ENCODE measurements at regions of chr2 and their contacts with region 1.

Region 1: GRCh38 chr2:119790466-119790865 is 30.7 kb downstream of the PTPN4 start:
- DNase-seq: no peak
- ATAC-seq: no peak
- H3K4me3 Mint-ChIP-seq: no peak overlapping the region
- H3K27ac Mint-ChIP-seq: 0 out of 2 replicates have a peak overlapping the region, but pooled peaks have one; percentile 100
- H3K4me1 Mint-ChIP-seq: peaks cover 43% of the 10 kb centered on the region
- H3K27me3 Mint-ChIP-seq: no peaks in the 10 kb centered on the region; the same call in 1 of the 2 replicates
- CTCF ChIP-seq: no peak

Region 2: DNA sequence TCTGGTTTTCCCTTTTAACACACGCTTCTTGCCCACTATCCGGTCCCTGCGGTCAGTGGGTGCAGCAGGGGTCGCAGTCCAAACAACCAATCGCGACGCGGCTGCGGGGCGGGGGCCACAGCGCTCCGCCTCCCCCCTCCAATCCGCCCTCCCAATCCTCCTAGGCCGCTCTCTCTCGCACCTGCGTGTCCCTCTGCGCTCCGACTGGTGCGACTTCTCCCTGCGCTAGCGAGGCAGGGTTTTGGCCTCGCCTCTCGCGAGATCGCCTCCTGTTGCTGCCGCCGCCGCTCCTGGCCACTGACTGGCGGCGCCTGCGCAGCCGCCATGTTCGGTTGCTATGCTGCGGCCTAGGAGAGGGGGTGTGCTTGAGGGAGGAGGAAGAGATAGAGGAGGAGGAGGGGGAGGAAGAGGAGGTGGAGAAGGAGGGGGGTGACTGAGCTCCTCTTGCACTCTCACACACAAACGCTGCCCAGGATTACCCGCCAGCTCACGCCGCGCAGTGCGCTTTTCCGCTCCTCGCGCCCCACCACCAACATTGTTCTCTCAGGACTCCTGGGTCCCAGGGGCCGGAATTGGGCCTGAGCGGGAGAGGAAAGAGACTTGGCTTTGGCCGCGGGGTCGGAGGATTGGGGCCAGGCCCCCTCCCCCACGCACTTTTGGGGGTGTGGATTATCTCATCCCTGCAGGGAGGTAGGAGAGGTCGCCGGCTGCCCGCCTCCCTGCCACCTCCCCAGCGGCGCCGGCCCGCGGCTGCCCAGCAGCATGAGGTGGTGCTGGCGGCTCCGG is 30.8 kb before region 1 on chr2 and contains the start of gene PTPN4:
- CTCF ChIA-PET with region 1: interaction called, 6 read pairs
- POLR2A ChIA-PET with region 1: interaction called, 13 read pairs
- DNase-seq: peak; percentile 98
- ATAC-seq: peak; percentile 96
- H3K4me3 Mint-ChIP-seq: peak within 1 kb of the TSS; percentile 96
- H3K27ac Mint-ChIP-seq: peak within 1 kb of the TSS; percentile 96
- H3K4me1 Mint-ChIP-seq: peaks cover 30% of the 10 kb centered on the region
- H3K27me3 Mint-ChIP-seq: no peaks in the 10 kb centered on the region
- CTCF ChIP-seq: no peak
- total RNA-seq, gene PTPN4: 79.4 to 85.8 TPM (median 79.7 TPM) in 3 replicates

Region 3: GRCh38 chr2:119771331-119771730 is 19.1 kb before region 1 on chr2:
- CTCF ChIA-PET with region 1: no interaction called
- POLR2A ChIA-PET with region 1: no interaction called
- DNase-seq: no peak
- ATAC-seq: no peak
- H3K4me3 Mint-ChIP-seq: no peak overlapping the region
- H3K27ac Mint-ChIP-seq: peak overlapping the region; percentile 63
- H3K4me1 Mint-ChIP-seq: peaks cover 22% of the 10 kb centered on the region
- H3K27me3 Mint-ChIP-seq: no peaks in the 10 kb centered on the region
- CTCF ChIP-seq: no peak

Measured in WTC11 (cell line).